ENCODE measurements at regions of chr12 and their contacts with region 1.

Region 1: DNA sequence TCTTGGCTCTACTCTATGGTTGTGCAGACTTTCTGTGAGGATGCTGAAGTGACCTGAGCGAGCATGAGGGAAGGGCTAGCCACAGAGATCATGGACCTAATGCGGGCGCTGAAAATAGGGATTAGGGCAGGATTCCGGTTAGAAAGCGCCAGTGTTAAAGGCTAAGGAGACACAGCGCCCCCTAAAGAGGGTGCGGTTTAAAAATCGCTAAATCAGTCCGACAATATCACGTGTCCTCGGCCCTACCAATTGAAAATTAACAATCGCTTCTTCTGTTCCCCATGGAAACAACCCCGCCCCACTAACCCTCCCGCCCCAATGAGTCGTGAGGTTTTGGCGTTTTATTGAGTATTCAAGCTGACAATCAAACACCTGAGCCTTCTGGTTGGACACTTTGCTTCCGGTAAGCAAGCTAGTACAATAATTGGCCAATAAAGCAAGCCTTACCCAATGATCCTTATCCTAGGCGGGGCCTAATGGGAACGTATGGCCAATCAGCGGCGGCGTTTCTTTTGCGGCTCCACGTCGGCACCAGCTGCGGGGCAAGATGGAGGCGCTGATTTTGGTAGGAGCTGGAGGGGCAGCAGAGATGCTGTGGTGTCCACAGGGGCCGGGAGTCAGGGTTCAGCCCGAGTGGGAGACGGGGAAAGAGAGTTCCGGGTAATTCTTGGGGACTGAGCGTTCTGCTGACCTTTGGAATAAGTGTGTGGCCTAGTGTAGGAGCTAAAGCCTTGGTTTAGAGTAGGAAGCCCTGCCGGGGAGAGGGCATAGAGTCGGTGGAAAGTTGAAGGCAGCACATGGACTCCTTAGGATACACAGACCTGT is at the start of gene COPZ1:
- DNase-seq: peak; percentile 91 to 97 (median 92)
- H3K4me3 ChIP-seq: peak within 1 kb of the TSS; percentile 61
- H3K27ac ChIP-seq: peak within 1 kb of the TSS; percentile 55 to 82
- H3K4me1 ChIP-seq: peaks cover 4% of the 10 kb centered on the region
- H3K27me3 ChIP-seq: no peaks in the 10 kb centered on the region
- CTCF ChIP-seq: peak; percentile 61 to 74 (median 68)
- EP300 ChIP-seq: no peak
- POLR2A ChIP-seq: peak; percentile 82
- total RNA-seq, gene COPZ1: 41.7 to 117 (median 108) TPM

Region 2: DNA sequence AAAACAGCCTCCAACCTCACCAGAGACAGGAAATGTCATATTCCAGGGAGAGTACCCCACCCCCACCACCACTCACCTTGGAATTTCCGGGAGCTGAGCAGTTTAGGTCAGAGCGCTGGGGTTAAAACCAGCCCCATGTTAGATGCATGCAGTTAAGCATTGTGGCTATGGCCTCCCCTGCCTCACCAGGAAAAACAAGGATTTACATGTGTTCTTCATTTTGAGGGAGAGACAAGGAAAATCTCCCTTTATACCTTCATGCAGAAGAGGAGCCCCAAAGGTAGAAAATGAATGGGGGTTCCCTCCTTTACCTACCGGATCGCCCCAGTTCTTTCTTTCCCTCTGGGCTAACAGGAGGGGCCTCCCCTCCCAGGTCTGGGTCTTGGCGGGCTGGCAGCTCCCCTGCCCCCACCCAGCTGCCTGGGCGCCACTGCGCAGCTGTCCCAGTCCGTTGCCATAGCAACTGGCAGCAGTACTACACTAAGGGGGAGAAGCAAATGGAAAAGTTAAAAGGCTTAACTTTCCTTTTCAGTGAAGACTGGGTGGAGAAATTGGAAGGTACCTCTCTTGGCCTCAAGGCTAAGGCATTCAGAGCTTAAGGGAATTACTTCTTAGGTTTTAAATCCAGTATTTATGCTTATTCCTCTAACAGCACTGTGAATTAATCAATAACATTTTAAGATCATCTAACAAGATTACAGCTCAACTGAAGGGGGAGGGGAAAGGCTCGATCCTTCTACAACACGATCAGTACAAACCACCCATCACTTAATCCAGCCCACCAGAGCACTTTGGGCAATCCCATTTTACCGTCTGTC is 65.4 kb before region 1 on chr12:
- intact Hi-C with region 1: loop called in 1 of 4 experiments (anchors 10 kb)
- DNase-seq: peak; percentile 77 to 88 (median 86)
- H3K4me3 ChIP-seq: peak overlapping the region; percentile 5
- H3K27ac ChIP-seq: peak overlapping the region in 1 of 2 donors; percentile 42
- H3K4me1 ChIP-seq: peaks cover 5% of the 10 kb centered on the region
- H3K27me3 ChIP-seq: no peaks in the 10 kb centered on the region
- CTCF ChIP-seq: no peak
- EP300 ChIP-seq: no peak
- POLR2A ChIP-seq: no peak

Region 3: DNA sequence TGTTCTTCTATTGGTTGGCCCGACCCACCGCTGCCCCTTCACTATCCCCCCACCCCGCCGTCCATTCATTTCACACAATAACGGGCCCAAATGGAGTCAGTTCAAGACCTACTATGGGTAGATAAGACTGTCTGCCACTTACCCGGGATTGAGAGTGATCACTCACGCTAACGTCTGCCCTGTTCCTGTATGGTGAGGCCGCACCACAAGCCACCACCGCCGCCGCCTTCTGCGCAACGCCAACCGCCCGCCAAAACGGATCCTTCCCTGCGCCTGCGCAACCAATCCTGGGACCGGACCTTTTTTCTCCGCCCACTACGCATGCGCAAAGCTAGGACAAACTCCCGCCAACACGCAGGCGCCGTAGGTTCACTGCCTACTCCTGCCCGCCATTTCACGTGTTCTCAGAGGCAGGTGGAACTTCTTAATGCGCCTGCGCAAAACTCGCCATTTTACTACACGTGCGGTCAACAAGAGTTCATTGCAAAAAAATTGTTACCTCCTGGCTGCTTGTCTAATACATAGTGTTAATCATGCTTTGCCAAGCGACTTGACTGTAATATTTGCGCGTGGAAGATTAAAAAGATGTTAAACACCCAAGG is 44.9 kb before region 1 on chr12 and contains the start of gene CBX5:
- intact Hi-C with region 1: loop called in 1 of 4 experiments (anchors 1 kb)
- DNase-seq: peak; percentile 99 to 100 (median 100)
- H3K4me3 ChIP-seq: peak within 1 kb of the TSS; percentile 65
- H3K27ac ChIP-seq: peak within 1 kb of the TSS; percentile 89 to 96
- H3K4me1 ChIP-seq: peaks cover 6% of the 10 kb centered on the region
- H3K27me3 ChIP-seq: no peaks in the 10 kb centered on the region
- CTCF ChIP-seq: peak in 1 of 3 donors; percentile 8
- EP300 ChIP-seq: peak; percentile 85
- POLR2A ChIP-seq: peak; percentile 91
- total RNA-seq, gene CBX5: 30.3 to 119 (median 103) TPM

Region 4: DNA sequence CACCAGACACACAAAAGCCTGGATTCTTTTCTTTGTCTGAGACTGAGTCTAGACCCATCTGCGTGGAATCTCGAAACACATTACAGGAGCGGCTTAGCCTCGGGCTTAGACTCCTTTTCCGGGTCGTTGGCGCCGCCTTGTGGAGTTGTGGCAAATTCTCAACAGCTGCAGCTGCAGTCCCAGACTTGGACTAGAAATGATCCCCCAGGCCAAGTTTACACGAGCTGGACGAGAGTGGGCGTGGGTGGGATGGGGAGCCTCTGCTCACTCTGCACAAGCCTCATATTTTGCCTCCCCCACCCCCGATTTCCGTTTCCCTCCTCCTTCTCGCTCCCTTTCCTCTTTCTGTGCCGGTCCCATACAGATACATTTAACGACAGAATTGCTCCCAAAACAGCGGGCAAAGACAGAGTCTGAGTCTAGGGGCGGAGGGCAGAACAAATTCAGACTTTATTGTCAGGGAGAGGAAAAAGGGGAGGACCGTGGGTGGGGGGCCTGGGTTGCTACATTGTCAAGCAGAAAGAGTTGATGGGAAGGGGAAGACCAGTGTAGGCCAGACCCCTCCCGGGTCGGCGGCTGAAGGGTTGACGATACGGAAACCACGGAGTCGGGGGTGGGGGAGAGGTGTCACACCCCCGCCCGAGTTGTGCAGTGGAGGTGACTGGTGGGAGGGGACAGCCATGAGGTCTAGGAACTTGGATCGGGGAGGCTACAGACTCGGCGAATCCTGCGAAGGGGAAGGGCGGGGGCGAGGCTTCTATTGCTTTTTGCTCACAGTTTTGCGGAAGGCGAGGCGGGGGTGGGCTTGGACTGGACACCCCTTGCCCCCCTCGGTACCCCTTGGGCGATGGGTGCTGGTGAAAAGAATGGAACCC is 44.1 kb after region 1 on chr12:
- intact Hi-C with region 1: loop called in 2 of 4 experiments (anchors 5 kb)
- DNase-seq: peak; percentile 90 to 94 (median 94)
- H3K4me3 ChIP-seq: peak overlapping the region; percentile 42
- H3K27ac ChIP-seq: peak overlapping the region; percentile 67 to 76
- H3K4me1 ChIP-seq: peaks cover 12% of the 10 kb centered on the region
- H3K27me3 ChIP-seq: no peaks in the 10 kb centered on the region
- CTCF ChIP-seq: peak; percentile 42 to 89 (median 86)
- EP300 ChIP-seq: no peak
- POLR2A ChIP-seq: no peak

Region 5: DNA sequence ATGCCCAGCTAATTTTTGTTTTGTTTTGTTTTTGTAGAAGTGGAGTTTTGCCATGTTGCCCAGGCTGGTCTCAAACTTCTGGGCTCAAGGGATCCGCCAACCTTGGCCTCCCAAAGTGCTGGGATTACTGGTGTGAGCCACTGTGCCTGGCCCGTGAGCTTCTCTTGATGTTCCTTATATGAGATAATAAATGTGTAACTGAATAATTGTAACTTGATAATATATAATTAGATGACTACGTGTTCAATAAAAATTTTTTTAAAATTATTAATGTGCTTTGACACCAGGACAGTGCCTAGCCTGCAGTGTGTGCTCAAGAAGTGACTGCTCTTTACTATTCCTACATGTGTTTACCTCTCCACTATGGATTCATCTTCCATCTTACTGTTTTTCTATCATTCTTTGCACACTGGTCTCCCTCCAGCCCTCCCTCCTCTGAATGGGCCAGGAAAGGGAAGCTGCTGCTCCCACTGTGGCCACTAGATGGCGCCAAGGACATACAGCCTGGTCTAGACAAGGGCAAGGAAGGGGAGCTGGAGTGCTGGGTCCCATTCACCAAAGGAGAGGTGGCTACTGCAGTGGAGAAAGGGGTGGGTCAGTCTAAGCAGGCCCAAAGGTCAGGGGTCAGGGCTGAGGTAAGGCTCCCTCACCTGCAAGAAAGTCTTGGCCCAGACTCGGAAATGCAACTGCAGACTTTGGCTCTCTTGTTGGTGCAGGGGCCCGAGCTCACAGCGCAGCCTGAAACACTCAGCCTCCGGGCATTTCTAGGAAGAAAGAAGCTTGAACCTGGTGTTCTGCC is 74.4 kb after region 1 on chr12:
- intact Hi-C with region 1: no loop called
- DNase-seq: peak; percentile 78 to 92 (median 89)
- H3K4me3 ChIP-seq: no peak overlapping the region
- H3K27ac ChIP-seq: no peak overlapping the region
- H3K4me1 ChIP-seq: no peaks in the 10 kb centered on the region
- H3K27me3 ChIP-seq: no peaks in the 10 kb centered on the region
- CTCF ChIP-seq: peak; percentile 90 to 96 (median 95)
- EP300 ChIP-seq: no peak
- POLR2A ChIP-seq: peak; percentile 27

Region 6: GRCh38 chr12:54489857-54490256 is 165.0 kb after region 1 on chr12:
- intact Hi-C with region 1: no loop called
- DNase-seq: no peak
- H3K4me3 ChIP-seq: no peak overlapping the region
- H3K27ac ChIP-seq: no peak overlapping the region
- H3K4me1 ChIP-seq: no peaks in the 10 kb centered on the region
- H3K27me3 ChIP-seq: no peaks in the 10 kb centered on the region
- CTCF ChIP-seq: no peak
- EP300 ChIP-seq: no peak
- POLR2A ChIP-seq: no peak